Cardiac septum (tissue), 1 donor: ENCODE measurements at regions of chr4 and their contacts with region 1.

Region 1: GRCh38 chr4:83284193-83285054 is at the start of gene COQ2:
- DNase-seq: peak; percentile 98
- total RNA-seq, gene COQ2: 13.1 TPM

Region 2: GRCh38 chr4:82890901-82891706 is 393.3 kb before region 1 on chr4 and contains the start of gene SEC31A:
- intact Hi-C with region 1: loop called (anchors 10 kb)
- DNase-seq: peak; percentile 99
- total RNA-seq, gene SEC31A: 140 TPM

Region 3: DNA sequence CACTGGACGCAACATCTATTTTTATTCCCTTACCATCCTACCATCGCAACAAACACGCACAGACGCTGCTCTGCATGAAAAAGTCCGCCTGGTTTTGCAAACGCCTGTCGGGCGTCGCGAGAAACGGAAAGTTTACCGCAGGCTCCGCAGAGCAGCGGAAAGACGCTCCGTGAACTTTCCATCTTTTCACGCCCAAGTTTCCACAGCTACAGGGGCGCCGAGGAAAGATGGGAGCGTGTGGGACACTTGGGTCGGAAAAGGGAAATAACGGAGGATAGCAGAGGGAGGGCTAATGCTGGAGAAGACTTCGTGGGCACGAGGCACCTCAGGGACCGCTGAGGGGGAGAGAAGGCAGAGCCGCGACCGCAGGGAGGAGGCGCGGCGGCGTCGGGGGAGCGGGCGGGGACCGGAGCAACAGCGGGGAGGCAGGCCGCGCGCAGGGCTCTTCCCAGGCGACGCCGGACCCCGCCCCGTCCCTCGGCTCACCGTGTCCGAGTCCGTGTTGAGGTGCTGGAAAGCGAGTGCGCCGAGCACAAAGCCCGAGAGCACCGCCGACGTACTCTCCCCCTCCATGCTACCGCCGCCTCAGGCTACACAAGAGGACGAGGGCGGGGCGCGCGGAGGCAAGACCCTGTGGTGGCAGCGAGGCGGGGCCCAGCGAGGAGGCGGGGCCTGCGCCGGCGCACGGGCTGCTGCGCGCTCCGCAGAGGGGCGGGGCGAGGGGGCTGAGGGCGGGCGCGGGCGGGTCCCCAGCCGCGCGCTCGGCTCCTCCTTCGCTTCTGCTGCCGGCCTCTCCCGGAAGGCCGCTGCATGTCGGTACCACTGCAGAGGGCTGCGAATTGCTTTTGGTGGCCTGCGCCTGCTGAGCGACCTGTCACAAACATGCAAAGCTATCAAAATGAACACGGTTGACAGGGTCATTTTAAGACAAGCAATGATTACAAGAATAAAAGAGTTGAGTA is 200.4 kb after region 1 on chr4 and contains the start of gene ABRAXAS1:
- intact Hi-C with region 1: loop called (anchors 10 kb)
- DNase-seq: peak; percentile 97
- total RNA-seq, gene ABRAXAS1: 6.4 TPM

Region 4: GRCh38 chr4:83658806-83659495 is 374.5 kb after region 1 on chr4:
- intact Hi-C with region 1: no loop called
- DNase-seq: no peak